ENCODE measurements at regions of chr20 and their contacts with region 1.

Region 1: DNA sequence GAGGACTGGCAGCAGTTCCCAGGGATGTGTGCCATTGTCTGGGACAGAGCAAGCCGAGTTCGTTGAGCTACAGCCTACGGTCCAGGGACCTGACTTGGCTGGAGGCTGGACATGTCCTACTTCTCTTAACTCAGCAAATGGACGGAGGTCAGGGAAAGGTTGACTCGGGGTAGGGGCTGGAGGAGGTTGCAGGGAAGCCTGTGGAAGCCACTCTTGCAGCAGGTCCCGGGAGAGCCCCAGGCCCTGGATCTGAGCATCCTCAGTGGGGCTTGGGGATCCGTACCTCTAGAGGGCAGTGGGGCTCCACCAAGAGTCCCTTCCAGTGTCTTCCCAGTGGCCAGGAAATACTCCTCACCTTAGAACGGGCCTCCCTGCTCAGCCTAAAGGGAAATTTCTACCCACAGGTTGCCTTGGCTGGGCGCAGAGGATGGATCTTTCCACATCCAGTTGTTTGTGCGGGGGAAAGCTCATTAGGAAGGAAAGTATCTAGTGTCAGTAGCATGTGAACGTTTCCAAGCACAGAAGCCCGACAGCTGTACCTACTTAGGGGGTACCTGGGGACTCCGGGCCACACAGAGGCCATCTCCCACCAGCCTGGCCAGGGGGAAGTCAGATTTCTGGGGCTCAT is 170.2 kb downstream of the NFATC2 start:
- DNase-seq: peak in 4 of 5 donors; percentile 41 to 54 (median 46)
- H3K4me3 ChIP-seq: no peak overlapping the region
- H3K4me3 Mint-ChIP-seq: no peak overlapping the region
- H3K27ac ChIP-seq: no peak overlapping the region
- H3K27ac Mint-ChIP-seq: peak overlapping the region in 2 of 7 donors; percentile 63 to 81
- H3K4me1 ChIP-seq: no peaks in the 10 kb centered on the region
- H3K4me1 Mint-ChIP-seq: peaks cover 0 to 6% (median 4%) of the 10 kb centered on the region in 4 donors
- H3K27me3 ChIP-seq: no peaks in the 10 kb centered on the region
- H3K27me3 Mint-ChIP-seq: no peaks in the 10 kb centered on the region

Region 2: DNA sequence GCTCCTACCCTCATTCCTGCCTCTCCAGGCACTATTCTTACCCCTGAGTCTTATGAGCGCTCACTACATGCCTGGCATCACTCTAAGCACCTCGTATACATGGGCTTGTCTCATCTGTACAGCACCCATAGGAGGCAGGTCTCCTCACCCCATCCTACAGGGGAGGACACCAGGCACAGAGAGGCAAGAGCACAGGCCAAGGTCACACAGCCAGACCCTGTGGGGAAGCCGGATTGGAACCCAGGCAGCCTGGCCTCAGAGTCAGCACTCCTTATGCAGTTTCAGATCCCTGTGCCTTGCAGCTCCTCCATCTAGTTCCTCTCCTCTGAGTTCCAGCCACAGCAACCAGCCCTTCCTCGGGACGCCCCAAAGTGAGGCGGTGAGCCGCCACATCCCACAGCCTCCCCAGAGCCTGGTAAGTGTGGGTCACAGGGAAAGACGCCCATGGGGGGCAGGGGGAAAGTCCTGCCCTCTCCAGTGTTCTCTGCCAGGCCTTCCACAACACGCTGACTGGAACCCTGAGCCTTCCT is 66.9 kb after region 1 on chr20:
- CTCF ChIA-PET with region 1: no interaction called
- POLR2A ChIA-PET with region 1: no interaction called
- intact Hi-C with region 1: no loop called
- DNase-seq: no peak
- H3K4me3 ChIP-seq: no peak overlapping the region
- H3K4me3 Mint-ChIP-seq: peak overlapping the region in 1 of 8 donors; percentile 46
- H3K27ac ChIP-seq: no peak overlapping the region
- H3K27ac Mint-ChIP-seq: peak overlapping the region in 6 of 7 donors; percentile 41 to 93 (median 78)
- H3K4me1 ChIP-seq: peaks cover 62% of the 10 kb centered on the region
- H3K4me1 Mint-ChIP-seq: peaks cover 37 to 75% (median 54%) of the 10 kb centered on the region in 4 donors
- H3K27me3 ChIP-seq: no peaks in the 10 kb centered on the region
- H3K27me3 Mint-ChIP-seq: no peaks in the 10 kb centered on the region

Region 3: DNA sequence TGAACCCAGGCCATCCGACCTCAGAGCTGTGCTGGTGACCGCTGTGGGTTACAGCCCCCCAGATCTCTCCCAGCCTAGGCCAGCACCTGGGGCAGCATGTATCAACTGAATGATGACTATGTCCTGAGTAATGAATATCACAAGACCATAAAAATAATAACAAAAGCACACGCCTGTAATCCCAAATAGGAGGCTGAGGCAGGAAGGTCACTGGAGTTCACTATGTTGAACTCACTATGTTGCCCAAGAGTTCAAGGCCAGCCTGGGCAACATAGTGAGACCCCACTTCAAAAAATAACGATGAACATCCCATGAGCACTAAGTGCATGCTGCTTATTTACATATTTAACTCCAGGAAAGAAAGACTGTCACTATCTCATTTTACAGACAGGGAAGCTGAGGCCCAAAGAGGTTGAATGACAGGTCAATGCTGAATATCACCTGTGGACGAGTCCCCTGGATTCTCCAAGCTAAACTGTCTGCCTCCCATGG is 78.0 kb after region 1 on chr20:
- CTCF ChIA-PET with region 1: interaction called, 6 read pairs
- POLR2A ChIA-PET with region 1: no interaction called
- intact Hi-C with region 1: loop called (anchors 2 kb)
- DNase-seq: no peak
- H3K4me3 ChIP-seq: no peak overlapping the region
- H3K4me3 Mint-ChIP-seq: no peak overlapping the region
- H3K27ac ChIP-seq: no peak overlapping the region
- H3K27ac Mint-ChIP-seq: peak overlapping the region in 3 of 7 donors; percentile 50 to 84 (median 71)
- H3K4me1 ChIP-seq: peaks cover 6% of the 10 kb centered on the region
- H3K4me1 Mint-ChIP-seq: peaks cover 24 to 62% (median 30%) of the 10 kb centered on the region in 4 donors
- H3K27me3 ChIP-seq: no peaks in the 10 kb centered on the region
- H3K27me3 Mint-ChIP-seq: no peaks in the 10 kb centered on the region

Region 4: DNA sequence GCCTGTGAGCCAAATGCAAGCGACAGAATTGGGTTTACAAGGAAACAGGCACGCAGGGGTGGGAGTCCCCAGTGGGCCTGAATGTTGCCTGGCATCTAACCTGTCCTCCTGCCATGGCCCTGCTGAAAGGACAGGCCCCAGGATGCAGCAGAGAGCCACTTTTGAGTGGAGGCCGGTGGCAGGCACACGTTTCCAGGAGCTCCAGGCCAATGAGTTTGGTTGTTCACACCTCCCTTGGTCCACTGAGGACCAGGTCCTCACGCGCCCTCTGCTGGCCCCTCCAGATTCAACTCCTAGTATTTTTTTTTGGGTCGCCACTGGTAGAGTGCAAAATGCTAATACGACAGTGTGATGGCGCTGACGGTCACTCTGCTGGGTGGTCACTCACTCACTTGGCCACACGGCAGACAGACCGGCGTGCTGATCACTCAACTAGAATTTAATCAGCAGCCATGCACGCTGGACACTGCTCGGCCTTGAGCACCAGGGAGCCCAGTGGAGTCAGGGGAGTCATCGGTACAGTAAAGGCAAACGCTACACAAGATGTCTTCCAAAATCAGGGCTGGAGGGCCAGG is 252.0 kb after region 1 on chr20:
- CTCF ChIA-PET with region 1: interaction called, 11 read pairs
- POLR2A ChIA-PET with region 1: no interaction called
- intact Hi-C with region 1: loop called (anchors 1 kb)
- DNase-seq: peak; percentile 47 to 56 (median 54)
- H3K4me3 ChIP-seq: no peak overlapping the region
- H3K4me3 Mint-ChIP-seq: no peak overlapping the region
- H3K27ac ChIP-seq: no peak overlapping the region
- H3K27ac Mint-ChIP-seq: no peak overlapping the region
- H3K4me1 ChIP-seq: no peaks in the 10 kb centered on the region
- H3K4me1 Mint-ChIP-seq: peaks cover 2 to 11% (median 5%) of the 10 kb centered on the region in 4 donors
- H3K27me3 ChIP-seq: no peaks in the 10 kb centered on the region
- H3K27me3 Mint-ChIP-seq: peaks cover 2 to 3% of the 10 kb centered on the region in 2 donors

Measured in CD4-positive, alpha-beta memory T cell (primary cell).